ENCODE measurements at regions of chr12 and their contacts with region 1.

Region 1: GRCh38 chr12:66087365-66087943 is 43.1 kb downstream of the LLPH start:
- DNase-seq: peak; percentile 81
- H3K4me3 Mint-ChIP-seq: no peak overlapping the region
- H3K27ac Mint-ChIP-seq: no peak overlapping the region
- H3K4me1 Mint-ChIP-seq: no peaks in the 10 kb centered on the region
- H3K27me3 Mint-ChIP-seq: peaks cover 12% of the 10 kb centered on the region

Region 2: GRCh38 chr12:65306366-65307168 is 780.9 kb before region 1 on chr12:
- CTCF ChIA-PET with region 1: no interaction called
- intact Hi-C with region 1: loop called (anchors 1 kb)
- DNase-seq: peak; percentile 31
- H3K4me3 Mint-ChIP-seq: no peak overlapping the region
- H3K27ac Mint-ChIP-seq: no peak overlapping the region
- H3K4me1 Mint-ChIP-seq: peaks cover 4% of the 10 kb centered on the region
- H3K27me3 Mint-ChIP-seq: peaks cover 18% of the 10 kb centered on the region

Region 3: DNA sequence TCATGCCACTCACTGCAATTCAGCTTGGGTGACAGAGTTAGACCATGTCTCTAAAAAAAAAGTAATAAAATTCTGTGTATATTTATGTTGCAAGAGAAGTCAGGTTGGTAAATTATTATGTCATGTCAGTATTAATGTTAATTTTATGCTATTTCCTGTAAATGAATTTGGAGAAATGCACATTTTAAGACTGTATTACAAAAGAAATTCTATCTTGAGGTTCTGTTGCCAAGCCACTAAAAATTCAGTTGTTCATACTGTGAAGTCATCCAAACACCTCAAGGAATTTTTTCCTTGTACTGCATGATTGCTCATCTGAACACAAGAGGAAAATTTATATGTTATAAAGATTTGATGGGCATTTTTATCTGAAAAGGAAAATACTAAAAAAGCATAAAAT is 286.5 kb before region 1 on chr12:
- CTCF ChIA-PET with region 1: no interaction called
- intact Hi-C with region 1: no loop called
- DNase-seq: no peak
- H3K4me3 Mint-ChIP-seq: no peak overlapping the region
- H3K27ac Mint-ChIP-seq: no peak overlapping the region
- H3K4me1 Mint-ChIP-seq: no peaks in the 10 kb centered on the region
- H3K27me3 Mint-ChIP-seq: peaks cover 33% of the 10 kb centered on the region

Region 4: GRCh38 chr12:65986047-65986446 is 101.4 kb before region 1 on chr12:
- CTCF ChIA-PET with region 1: no interaction called
- intact Hi-C with region 1: loop called (anchors 5 kb)
- DNase-seq: no peak
- H3K4me3 Mint-ChIP-seq: no peak overlapping the region
- H3K27ac Mint-ChIP-seq: no peak overlapping the region
- H3K4me1 Mint-ChIP-seq: no peaks in the 10 kb centered on the region
- H3K27me3 Mint-ChIP-seq: peaks cover 5% of the 10 kb centered on the region